Naive thymus-derived CD8-positive, alpha-beta T cell (primary cell): ENCODE measurements at regions of chr18 and their contacts with region 1.

Region 1: GRCh38 chr18:46657115-46657955 is at the start of gene LOXHD1:
- DNase-seq: no peak
- ATAC-seq: no peak
- H3K4me3 Mint-ChIP-seq: no peak within 1 kb of the TSS
- H3K27ac Mint-ChIP-seq: peak within 1 kb of the TSS in 1 of 10 donors; percentile 42
- H3K4me1 Mint-ChIP-seq: peaks cover 0 to 3% (median 0%) of the 10 kb centered on the region in 4 donors
- H3K27me3 Mint-ChIP-seq: peaks cover 0 to 2% (median 0%) of the 10 kb centered on the region in 5 donors
- polyA plus RNA-seq, gene LOXHD1: not detected

Region 2: DNA sequence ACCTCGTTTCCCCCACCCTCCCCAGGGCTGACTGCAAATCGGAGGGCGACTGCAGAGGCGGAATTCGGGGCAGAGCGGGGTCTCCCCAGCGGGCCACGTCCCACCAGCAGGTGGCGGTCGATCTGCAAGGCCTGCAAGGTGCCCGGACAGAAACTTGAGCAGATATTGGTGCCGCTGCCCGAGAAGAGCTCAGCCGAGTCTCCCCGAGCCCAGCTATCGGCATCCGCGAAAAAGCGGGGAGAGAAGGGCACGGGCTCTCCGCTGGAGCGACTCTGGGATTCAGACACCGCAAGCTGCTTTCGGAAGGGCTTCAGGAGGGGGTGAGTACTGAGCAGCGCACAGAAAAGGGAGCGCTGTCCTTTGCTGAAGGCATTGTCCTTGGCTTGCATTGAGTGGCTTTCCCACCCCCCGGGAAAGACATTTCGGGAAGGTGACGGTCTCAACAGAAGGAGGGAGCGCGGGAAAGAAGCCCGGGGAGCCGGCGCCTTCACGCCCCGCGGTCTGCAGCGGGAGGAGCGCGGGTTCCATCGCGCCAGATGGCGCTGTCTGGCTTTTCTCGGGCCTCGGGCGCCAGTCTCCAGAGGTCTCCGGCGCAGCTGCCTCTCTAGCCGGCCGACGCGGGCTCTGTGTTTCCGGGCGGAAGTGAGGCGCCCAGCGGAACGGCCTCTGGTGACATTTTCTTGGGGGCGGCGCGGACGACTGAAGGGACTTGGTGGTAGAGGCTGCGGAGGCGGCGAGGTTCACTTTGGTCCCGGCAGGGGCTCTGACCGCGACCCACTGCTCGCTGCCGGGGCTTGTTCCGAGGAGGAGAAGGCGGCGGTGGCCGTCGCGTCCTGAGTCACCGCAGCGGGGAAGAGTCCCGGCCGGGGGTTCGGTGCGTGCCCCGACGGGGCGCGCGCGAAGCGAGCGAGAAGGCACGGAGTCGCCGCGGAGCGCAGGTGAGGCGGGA is 483.7 kb before region 1 on chr18:
- POLR2A ChIA-PET with region 1: interaction called, 11 read pairs
- DNase-seq: peak; percentile 87 to 96 (median 92)
- ATAC-seq: peak; percentile 89 to 90
- H3K4me3 Mint-ChIP-seq: peak overlapping the region; percentile 97 to 99 (median 98)
- H3K27ac Mint-ChIP-seq: peak overlapping the region; percentile 92 to 99 (median 98)
- H3K4me1 Mint-ChIP-seq: peaks cover 16 to 47% (median 40%) of the 10 kb centered on the region in 4 donors
- H3K27me3 Mint-ChIP-seq: no peaks in the 10 kb centered on the region

Region 3: DNA sequence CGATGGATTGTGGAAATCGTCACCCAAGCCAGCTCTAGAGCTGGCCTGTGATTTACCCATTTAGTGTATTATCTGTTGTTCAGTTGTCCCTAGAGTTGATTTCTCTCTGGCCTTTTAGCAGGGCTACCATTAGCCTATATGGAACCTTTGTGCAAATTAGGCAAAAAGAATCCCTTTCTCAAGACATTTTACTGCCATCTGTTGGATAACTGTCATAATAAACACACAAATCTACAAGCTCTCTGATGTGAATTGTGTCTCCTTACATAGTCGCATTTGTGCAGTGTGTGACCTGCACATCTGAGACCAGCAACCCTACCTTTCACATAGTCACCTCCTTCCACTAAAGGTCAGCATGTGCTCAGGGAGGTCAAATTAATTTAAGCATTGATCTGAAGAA is 34.3 kb before region 1 on chr18:
- POLR2A ChIA-PET with region 1: interaction called, 11 read pairs
- DNase-seq: peak in 1 of 10 donors; percentile 6
- ATAC-seq: peak in 1 of 2 donors; percentile 27
- H3K4me3 Mint-ChIP-seq: peak overlapping the region; percentile 9 to 75 (median 38)
- H3K27ac Mint-ChIP-seq: peak overlapping the region in 9 of 10 donors; percentile 76 to 90 (median 84)
- H3K4me1 Mint-ChIP-seq: peaks cover 33 to 49% (median 40%) of the 10 kb centered on the region in 4 donors
- H3K27me3 Mint-ChIP-seq: peaks cover 0 to 2% (median 0%) of the 10 kb centered on the region in 5 donors